BJ (cell line): ENCODE measurements at regions of chr6 and their contacts with region 1.

Region 1: GRCh38 chr6:112087136-112087911 is at the starts of genes FAM229B and TUBE1:
- DNase-seq: peak; percentile 87
- H3K4me3 ChIP-seq: peak within 1 kb of the TSS; percentile 77
- H3K27me3 ChIP-seq: no peaks in the 10 kb centered on the region
- CTCF ChIP-seq: peak; percentile 29; the same call in 1 of the 2 replicates
- polyA plus RNA-seq, gene FAM229B: 26.8 and 40.7 TPM in 2 replicates
- polyA plus RNA-seq, gene TUBE1: 16.6 and 36.1 TPM in 2 replicates

Region 2: DNA sequence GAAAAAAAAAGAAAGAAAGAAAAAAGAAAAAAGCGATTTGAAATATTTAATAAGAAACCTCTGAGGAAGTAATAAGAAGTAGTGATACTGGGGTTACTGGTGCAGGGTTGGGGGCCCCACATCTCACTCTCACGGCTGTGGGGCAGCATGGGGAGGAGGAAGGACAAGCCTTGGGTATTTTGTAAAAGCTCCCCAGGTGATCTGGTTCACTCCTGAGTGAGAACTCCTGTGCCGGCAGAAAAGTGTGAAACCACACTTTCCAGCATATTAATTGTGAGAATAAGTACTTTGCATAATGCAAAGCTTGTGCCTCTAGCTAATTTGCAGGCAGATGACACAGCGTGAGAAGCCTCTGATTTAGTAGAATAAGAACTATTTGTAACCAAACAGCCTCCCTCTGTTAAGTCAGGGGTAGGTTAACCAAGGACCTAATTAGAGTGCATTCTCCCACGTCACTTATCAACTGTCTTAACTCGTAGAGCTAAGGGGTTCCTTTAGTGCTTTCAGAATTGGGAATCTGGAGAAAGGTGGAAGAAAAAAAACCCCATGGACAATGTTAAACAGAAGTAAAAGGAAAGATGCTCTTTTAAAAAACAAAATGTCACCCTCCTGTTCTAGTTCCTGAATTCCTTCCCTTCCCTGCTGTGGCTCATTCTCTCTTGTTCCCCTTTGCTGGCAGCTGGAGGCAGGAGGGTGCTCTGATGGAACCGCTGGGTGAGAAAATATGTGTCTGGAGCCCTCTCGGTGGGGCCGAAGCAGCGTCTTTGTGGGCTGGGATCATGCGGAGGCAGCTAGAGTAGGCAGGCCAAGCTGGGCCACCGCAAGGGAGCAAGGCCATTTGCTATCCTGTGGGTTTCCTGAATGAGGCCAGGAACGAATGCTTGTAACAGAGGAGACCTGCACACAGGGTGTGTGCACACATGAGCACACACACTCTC is 322.8 kb before region 1 on chr6:
- CTCF ChIA-PET with region 1: no interaction called
- POLR2A ChIA-PET with region 1: no interaction called
- DNase-seq: no peak
- H3K4me3 ChIP-seq: no peak overlapping the region
- H3K27me3 ChIP-seq: no peaks in the 10 kb centered on the region
- CTCF ChIP-seq: no peak

Region 3: GRCh38 chr6:111985202-111985731 is 102.1 kb before region 1 on chr6:
- CTCF ChIA-PET with region 1: no interaction called
- POLR2A ChIA-PET with region 1: no interaction called
- DNase-seq: peak; percentile 82
- H3K4me3 ChIP-seq: no peak overlapping the region
- H3K27me3 ChIP-seq: no peaks in the 10 kb centered on the region
- CTCF ChIP-seq: no peak

Region 4: DNA sequence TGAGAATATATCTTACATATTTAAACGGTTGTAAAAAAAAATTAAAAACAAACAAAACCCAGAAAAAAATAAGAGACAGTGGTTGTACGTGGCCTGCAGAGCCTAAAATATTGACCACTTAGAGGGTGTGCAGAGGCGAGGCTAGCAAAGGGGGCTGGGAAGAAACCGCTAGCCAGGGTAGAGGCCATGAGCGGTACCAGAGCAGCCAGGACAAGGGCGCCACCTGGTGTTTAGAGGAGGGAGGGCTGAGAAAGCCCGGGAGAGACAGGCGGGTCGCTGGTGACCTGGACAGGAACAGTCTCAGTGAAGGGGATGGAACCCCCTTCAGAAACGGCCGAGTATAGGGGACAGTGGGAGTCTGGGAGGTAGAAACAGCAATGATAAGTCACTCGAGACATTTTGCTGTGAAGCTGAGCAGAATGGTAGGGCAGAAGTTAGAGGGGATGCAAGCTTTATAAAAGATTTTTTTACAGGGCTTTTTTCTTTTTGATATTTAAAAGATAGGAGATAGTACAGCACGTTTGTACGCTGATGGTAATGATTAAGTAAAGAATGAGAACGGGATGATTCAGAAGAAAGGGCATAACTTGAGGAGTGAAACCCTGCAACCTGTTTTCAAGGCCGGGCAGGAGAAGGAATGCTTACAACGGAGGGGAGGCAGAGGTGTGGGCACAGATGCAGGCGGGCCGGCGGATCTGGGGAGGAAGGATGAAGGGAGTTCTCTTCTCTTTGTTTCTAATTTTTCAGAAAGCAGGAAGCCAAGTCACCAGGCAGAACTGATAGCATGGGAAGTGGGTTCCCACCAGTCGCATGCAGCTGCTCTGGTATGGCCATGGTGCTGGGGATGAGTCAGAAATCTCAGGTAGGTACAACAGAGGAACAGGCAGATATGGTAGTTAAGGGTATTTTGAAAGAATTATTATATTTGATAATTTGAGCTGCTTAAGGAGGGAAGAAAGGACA is 76.3 kb after region 1 on chr6:
- CTCF ChIA-PET with region 1: interaction called, 20 read pairs
- POLR2A ChIA-PET with region 1: no interaction called
- DNase-seq: no peak
- H3K4me3 ChIP-seq: no peak overlapping the region
- H3K27me3 ChIP-seq: no peaks in the 10 kb centered on the region
- CTCF ChIP-seq: peak; percentile 85